Activated T-helper 1 cell treated with anti-CD3 and anti-CD28 coated beads, Interleukin-12 subunit alpha, Interleukin-12 subunit beta, Interleukin-2, Interleukin-4 antibody, amounts not matched to agents 30 ng/mL and 10 ng/mL and 1 ng/mL, durations not matched to agents 14 hours and 24 hours and 36 hours (primary cell): ENCODE measurements at regions of chr7 and their contacts with region 1.

Region 1: DNA sequence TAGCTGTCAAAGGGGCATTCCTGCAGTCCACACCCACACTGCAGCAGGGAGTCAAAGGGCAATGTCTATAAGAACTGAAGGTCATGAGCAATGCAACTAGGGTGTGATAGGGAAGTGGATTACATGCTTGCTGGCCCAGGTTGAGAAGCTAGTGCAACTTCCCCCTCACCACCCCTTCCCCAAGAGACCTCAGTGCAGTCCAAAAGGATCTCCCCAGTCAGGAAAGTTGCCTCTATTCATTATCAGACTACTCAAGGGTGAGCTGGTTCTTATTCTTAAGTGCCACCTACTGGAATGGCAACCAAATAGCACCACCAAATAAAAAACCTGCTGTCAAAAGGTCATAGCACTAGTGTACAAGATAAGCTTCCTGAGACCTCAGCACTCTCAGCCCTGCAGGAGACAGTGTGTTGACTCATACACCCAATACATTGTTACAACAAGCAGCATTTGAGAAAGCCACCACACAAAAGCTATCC is 28.2 kb downstream of the MTERF1 start:
- DNase-seq: no peak
- H3K4me3 Mint-ChIP-seq: no peak overlapping the region
- H3K27ac Mint-ChIP-seq: no peak overlapping the region
- H3K4me1 Mint-ChIP-seq: no peaks in the 10 kb centered on the region
- H3K27me3 Mint-ChIP-seq: no peaks in the 10 kb centered on the region

Region 2: DNA sequence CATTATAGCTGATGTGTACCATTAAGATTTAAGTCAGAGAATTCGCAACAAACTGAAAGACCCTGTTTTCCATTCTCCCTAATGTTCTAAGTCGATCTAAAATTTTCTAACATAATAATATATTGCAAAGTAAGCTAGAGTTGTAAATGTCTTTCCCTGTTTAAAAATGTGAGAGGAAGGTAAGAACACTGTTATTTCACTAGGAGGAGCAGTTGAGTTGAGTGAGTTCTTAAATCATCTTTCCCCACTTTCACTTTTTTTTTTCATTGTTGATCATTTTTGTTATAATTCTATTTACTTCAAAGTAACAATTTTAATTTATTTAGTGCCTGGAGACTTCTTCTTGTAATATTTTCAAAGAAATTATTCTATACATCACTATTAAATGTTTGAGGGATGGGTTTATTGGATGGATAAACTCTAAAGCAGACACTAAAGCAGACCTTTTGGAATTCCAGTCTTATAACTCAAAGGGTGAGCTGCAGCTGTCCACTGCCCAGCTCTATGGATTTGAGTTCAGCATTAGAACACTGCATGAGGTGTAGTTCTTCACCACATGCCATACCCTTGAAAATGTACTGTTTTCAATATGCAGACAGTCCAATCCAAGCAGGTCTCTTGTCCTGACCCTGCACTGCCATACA is 769.3 kb before region 1 on chr7:
- intact Hi-C with region 1: loop called (anchors 2 kb)
- DNase-seq: no peak
- H3K4me3 Mint-ChIP-seq: no peak overlapping the region
- H3K27ac Mint-ChIP-seq: no peak overlapping the region
- H3K4me1 Mint-ChIP-seq: peaks cover 12% of the 10 kb centered on the region
- H3K27me3 Mint-ChIP-seq: peaks cover 4% of the 10 kb centered on the region

Region 3: GRCh38 chr7:92633211-92633906 is 781.1 kb after region 1 on chr7:
- intact Hi-C with region 1: no loop called
- DNase-seq: peak; percentile 48
- H3K4me3 Mint-ChIP-seq: peak overlapping the region; percentile 64
- H3K27ac Mint-ChIP-seq: peak overlapping the region; percentile 94
- H3K4me1 Mint-ChIP-seq: peaks cover 80% of the 10 kb centered on the region
- H3K27me3 Mint-ChIP-seq: no peaks in the 10 kb centered on the region